HepG2 (cell line): ENCODE measurements at regions of chr12 and their contacts with region 1.

Region 1: GRCh38 chr12:112131686-112132085 is 6.3 kb downstream of the TRAFD1 start:
- DNase-seq: no peak
- ATAC-seq: no peak
- H3K4me3 ChIP-seq: no peak overlapping the region
- H3K27ac ChIP-seq: no peak overlapping the region
- H3K4me1 ChIP-seq: peaks cover 31% of the 10 kb centered on the region
- H3K27me3 ChIP-seq: no peaks in the 10 kb centered on the region
- CTCF ChIP-seq: no peak
- EP300 ChIP-seq: no peak
- POLR2A ChIP-seq: no peak
- RAD21 ChIP-seq: no peak

Region 2: DNA sequence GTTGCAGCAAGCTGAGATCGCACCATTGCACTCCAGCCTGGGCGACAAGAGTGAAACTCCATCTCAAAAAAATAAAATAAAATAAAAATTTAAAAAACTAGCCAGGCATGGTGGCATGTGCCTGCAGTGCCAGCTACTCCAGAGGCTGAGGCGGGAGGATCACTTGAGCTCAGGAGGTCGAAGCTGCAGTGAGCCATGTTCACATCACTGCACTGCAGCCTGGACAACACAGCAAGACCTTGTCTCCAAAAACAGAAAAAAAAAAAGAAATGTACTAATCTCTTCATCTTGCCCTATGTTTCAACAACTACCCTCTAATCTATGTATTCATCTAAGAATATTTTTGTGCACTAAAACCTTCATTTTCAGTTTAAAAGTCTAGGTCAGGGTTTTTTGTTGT is 29.6 kb before region 1 on chr12:
- CTCF ChIA-PET with region 1: no interaction called
- POLR2A ChIA-PET with region 1: interaction called, 85 read pairs
- in situ Hi-C with region 1: no loop called
- intact Hi-C with region 1: loop called (anchors 1 kb)
- DNase-seq: no peak
- ATAC-seq: no peak
- H3K4me3 ChIP-seq: no peak overlapping the region
- H3K27ac ChIP-seq: no peak overlapping the region
- H3K4me1 ChIP-seq: peaks cover 32% of the 10 kb centered on the region
- H3K27me3 ChIP-seq: no peaks in the 10 kb centered on the region
- CTCF ChIP-seq: no peak
- EP300 ChIP-seq: no peak
- POLR2A ChIP-seq: no peak
- RAD21 ChIP-seq: no peak